ENCODE measurements at regions of chr1 and their contacts with region 1.

Region 1: DNA sequence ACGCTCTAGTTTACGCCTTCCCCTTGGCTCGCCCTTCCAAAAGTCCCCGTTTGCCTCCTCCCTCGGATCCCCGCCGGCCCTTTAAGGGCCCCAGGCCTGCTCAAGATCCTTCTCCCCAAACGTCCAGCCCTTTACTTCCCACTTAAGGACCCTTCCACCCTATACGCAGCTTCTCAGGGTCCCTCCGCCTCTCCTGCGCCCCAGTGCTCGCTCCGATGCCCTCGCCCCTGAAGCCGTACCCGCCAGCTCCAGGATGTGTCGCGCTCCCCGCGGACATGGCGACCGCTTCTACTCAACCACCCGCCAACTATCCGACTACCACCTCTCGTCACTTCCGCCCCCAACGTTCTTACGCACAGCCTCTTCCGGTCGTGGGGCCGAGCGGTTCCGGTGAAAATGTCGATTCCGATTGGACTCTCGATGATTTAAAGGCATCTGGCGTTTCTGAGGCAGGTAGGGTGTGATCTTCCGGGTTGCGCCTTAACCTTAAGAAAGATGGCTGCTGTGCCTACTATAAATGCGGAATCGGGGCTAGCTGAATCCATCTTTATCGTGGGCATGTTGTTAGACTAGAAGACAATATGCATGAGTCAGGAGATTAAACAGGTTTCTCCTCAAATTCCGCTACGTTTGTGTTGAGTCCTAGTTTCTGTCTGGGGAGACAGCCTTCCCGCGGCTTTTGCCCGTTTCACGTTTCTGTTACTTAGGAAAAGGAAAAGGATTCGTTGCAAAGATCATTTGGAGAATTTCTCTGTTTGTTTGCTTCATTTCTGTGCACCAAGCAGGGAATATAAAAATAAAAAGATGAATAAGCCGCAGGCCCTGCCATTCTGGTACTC is at the start of gene KHDC4:
- DNase-seq: peak; percentile 94
- H3K4me3 Mint-ChIP-seq: no peak within 1 kb of the TSS
- H3K27ac Mint-ChIP-seq: peak within 1 kb of the TSS; percentile 61
- H3K4me1 Mint-ChIP-seq: peaks cover 39% of the 10 kb centered on the region
- H3K27me3 Mint-ChIP-seq: no peaks in the 10 kb centered on the region
- total RNA-seq, gene KHDC4: 80.1 and 81.8 TPM in 2 replicates

Region 2: DNA sequence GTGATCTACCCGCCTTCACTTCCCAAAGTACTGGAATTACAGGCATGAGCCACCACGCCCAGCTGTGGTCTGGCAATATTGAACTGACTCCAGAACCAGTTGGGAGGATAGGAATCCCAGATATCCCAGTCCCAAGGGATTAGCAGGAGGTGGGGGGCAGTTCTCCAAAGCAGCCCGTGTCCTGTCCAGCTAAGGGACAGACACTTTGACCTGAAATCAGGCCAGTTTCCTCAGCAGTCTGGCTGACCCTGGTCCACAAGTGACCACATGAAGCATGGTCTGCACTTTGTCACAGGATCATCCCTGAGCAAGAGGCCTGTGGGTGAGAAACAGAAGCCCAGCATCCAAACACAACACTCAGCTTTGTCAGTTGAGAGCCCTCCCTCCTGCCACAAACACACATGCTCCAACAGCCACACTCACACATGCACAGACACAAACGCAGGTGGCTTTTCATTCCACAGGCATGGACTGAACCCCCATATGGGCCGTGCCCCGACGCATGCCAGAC is 628.4 kb before region 1 on chr1:
- intact Hi-C with region 1: no loop called
- DNase-seq: no peak
- H3K4me3 Mint-ChIP-seq: no peak overlapping the region
- H3K27ac Mint-ChIP-seq: peak overlapping the region; percentile 69
- H3K4me1 Mint-ChIP-seq: peaks cover 14% of the 10 kb centered on the region
- H3K27me3 Mint-ChIP-seq: no peaks in the 10 kb centered on the region

Region 3: DNA sequence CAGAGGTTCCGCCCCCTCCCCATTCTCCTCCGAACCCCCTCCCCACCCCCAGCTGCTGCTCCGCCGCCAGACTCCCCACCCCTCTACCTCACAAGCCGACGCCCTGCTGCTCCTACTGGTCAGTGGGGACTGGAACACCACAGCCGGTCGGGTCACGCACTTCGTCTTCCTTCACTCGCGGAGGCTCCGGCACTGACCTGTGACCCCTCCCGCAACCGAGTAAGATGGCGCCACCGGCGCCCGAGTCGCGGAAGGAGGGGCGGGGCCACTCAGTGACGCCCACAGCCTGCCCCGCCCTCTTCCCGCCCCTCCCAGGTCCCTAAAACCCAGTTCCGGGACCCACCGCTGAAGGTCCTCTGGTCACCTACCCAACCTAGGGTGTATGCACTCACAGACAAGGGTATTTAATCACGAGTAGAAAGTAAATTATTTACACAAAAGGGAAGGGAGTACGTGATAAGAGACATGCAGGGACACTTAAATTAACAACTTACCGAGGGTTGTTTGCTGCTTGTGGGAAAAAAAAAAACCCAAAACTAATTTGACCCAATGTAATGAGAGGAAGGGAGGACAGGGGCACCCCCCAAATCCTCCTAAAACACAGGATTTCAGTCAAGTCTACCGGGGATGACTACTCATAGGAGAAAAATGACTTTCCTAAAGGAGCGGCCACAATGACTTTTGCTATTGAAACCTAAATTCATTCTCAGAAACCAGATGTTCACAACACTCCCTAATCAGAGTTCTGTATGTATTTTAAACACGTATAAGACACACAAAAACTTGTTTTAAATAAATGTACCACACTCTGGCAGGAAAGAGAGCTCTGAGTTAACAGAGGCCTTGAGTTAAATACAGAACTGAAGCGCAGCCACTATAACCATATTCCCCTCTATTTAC is 22.9 kb before region 1 on chr1 and contains the start of gene RIT1:
- intact Hi-C with region 1: loop called (anchors 1 kb)
- DNase-seq: peak; percentile 81
- H3K4me3 Mint-ChIP-seq: peak within 1 kb of the TSS; percentile 98
- H3K27ac Mint-ChIP-seq: peak within 1 kb of the TSS; percentile 97
- H3K4me1 Mint-ChIP-seq: peaks cover 23% of the 10 kb centered on the region
- H3K27me3 Mint-ChIP-seq: peaks cover 2% of the 10 kb centered on the region
- total RNA-seq, gene RIT1: 20.2 and 22.3 TPM in 2 replicates

Region 4: GRCh38 chr1:155978325-155978972 is 44.1 kb after region 1 on chr1 and contains the start of gene ARHGEF2:
- intact Hi-C with region 1: loop called (anchors 1 kb)
- DNase-seq: peak; percentile 71
- H3K4me3 Mint-ChIP-seq: peak within 1 kb of the TSS; percentile 92
- H3K27ac Mint-ChIP-seq: peak within 1 kb of the TSS; percentile 95
- H3K4me1 Mint-ChIP-seq: peaks cover 78% of the 10 kb centered on the region
- H3K27me3 Mint-ChIP-seq: no peaks in the 10 kb centered on the region
- total RNA-seq, gene ARHGEF2: 221 and 222 TPM in 2 replicates

Region 5: DNA sequence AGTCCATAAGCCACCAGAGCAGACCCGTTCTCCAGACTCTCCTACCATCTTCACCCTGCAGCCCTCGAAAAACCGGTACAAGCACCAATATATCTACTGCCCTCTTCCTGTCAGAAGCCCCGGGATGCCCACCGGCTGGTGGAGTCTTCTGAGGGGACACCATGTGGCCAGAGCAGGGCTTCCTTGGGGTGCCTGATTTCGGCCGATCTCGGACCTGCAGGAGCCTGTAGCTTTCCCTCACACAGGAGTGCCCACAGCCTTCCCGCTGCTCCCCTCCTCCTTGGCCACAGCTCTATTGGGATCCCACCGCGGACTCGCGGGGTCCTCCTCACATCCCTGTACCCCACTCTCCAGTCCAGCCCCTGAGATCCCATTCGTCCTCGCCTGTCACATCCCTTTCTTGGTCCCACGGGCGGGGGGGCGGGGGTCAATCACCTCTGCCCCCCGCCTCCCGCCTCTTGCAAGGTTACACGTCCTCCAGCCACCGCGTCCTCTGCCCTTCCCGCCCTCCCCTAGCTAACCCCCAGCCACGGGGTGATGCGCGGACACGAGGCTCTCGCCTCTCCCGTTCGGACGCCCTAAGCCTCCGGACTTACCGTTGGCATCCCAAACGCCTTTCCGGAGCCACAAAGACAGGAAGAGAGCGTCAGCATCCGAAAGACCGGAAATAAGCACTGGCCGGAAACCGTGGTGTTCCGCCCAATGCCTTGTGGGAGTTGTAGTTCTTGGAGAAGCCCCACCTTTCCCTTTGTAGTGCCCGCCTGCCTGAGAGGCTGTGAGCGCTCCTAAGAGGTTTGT is 86.2 kb after region 1 on chr1 and contains the start of gene SSR2:
- intact Hi-C with region 1: loop called (anchors 1 kb)
- DNase-seq: peak; percentile 85
- H3K4me3 Mint-ChIP-seq: peak within 1 kb of the TSS; percentile 98
- H3K27ac Mint-ChIP-seq: peak within 1 kb of the TSS; percentile 94
- H3K4me1 Mint-ChIP-seq: peaks cover 29% of the 10 kb centered on the region
- H3K27me3 Mint-ChIP-seq: peaks cover 4% of the 10 kb centered on the region
- total RNA-seq, gene SSR2: 195 TPM in 2 replicates

Region 6: GRCh38 chr1:156338180-156338973 is 404.1 kb after region 1 on chr1 and contains the starts of genes CCT3 and TSACC:
- intact Hi-C with region 1: loop called (anchors 10 kb)
- DNase-seq: peak; percentile 99
- H3K4me3 Mint-ChIP-seq: peak within 1 kb of the TSS; percentile 98
- H3K27ac Mint-ChIP-seq: peak within 1 kb of the TSS; percentile 95
- H3K4me1 Mint-ChIP-seq: peaks cover 41% of the 10 kb centered on the region
- H3K27me3 Mint-ChIP-seq: peaks cover 5% of the 10 kb centered on the region
- total RNA-seq, gene CCT3: 567 and 570 TPM in 2 replicates
- total RNA-seq, gene TSACC: 0.81 TPM in 1 of 2 replicates, not detected in the other

Measured in activated T-helper 1 cell treated with anti-CD3 and anti-CD28 coated beads, Interleukin-12 subunit alpha, Interleukin-12 subunit beta, Interleukin-2, Interleukin-4 antibody, amounts not matched to agents 30 ng/mL and 10 ng/mL and 1 ng/mL, durations not matched to agents 14 hours and 24 hours and 36 hours (primary cell).